HCT116 (cell line): ENCODE measurements at regions of chrX and their contacts with region 1.

Region 1: DNA sequence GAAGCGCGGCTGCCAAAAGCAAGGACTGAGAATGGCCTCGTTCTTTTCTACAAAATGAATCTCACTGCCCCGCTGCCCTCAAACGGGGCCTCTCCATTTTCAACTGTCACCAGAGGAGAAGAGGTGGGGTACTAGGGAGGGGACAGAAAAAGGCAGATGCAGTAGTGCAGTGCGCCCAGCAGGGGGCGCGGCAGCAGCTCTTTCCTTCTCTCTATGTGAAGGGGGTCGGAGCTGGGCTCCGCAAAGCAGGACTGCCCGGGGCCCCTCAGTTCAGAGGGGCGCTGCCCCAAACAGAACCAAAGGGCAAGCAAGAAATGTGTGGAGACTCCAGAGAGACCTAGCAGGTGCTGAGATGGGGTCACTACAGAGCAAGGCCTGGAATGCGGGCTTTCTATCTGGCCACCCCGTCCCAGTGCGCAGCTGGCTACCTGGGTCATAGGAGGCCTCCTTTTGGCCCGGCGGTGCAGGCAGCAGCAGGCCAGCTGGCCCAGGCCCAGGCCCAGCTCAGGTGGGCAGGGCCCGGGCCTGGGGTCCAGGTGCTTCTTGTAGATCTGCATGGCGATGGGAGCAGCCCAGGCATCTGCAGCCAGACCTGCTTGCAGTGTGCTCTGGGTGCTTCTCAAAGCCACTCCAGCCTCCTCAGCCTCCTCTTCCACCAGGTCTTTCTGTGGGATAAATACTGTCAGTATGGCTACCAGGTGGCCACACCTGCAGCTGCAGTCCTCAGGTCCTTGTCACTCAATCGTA is 5.9 kb downstream of the IRAK1 start:
- DNase-seq: no peak
- ATAC-seq: peak; percentile 68
- H3K4me3 ChIP-seq: no peak overlapping the region
- H3K27ac ChIP-seq: no peak overlapping the region
- H3K4me1 ChIP-seq: peaks cover 0 to 22% of the 10 kb centered on the region in 2 experiments; a peak in 2 of 4 replicates
- H3K27me3 ChIP-seq: no peaks in the 10 kb centered on the region
- CTCF ChIP-seq: peak in 2 of 3 experiments; percentile 78; a peak in 4 of 6 replicates
- POLR2A ChIP-seq: no peak
- RAD21 ChIP-seq: no peak

Region 2: GRCh38 chrX:154051201-154051810 is 37.5 kb after region 1 on chrX:
- CTCF ChIA-PET with region 1: no interaction called
- POLR2A ChIA-PET with region 1: no interaction called
- RAD21 ChIA-PET with region 1: no interaction called
- intact Hi-C with region 1: loop called (anchors 1 kb)
- DNase-seq: peak; percentile 3
- ATAC-seq: peak; percentile 86
- H3K4me3 ChIP-seq: no peak overlapping the region
- H3K27ac ChIP-seq: no peak overlapping the region
- H3K4me1 ChIP-seq: no peaks in the 10 kb centered on the region
- H3K27me3 ChIP-seq: no peaks in the 10 kb centered on the region
- CTCF ChIP-seq: peak; percentile 34 to 67 (median 61); a peak in 5 of 6 replicates
- POLR2A ChIP-seq: no peak
- RAD21 ChIP-seq: peak; percentile 49

Region 3: GRCh38 chrX:154074199-154074598 is 60.4 kb after region 1 on chrX:
- CTCF ChIA-PET with region 1: no interaction called
- POLR2A ChIA-PET with region 1: no interaction called
- RAD21 ChIA-PET with region 1: no interaction called
- intact Hi-C with region 1: no loop called
- DNase-seq: no peak
- ATAC-seq: peak; percentile 87
- H3K4me3 ChIP-seq: no peak overlapping the region
- H3K27ac ChIP-seq: peak overlapping the region; percentile 42; the same call in 1 of the 2 replicates
- H3K4me1 ChIP-seq: peaks cover 16 to 19% of the 10 kb centered on the region in 2 experiments
- H3K27me3 ChIP-seq: no peaks in the 10 kb centered on the region
- CTCF ChIP-seq: no peak
- POLR2A ChIP-seq: no peak
- RAD21 ChIP-seq: no peak

Region 4: DNA sequence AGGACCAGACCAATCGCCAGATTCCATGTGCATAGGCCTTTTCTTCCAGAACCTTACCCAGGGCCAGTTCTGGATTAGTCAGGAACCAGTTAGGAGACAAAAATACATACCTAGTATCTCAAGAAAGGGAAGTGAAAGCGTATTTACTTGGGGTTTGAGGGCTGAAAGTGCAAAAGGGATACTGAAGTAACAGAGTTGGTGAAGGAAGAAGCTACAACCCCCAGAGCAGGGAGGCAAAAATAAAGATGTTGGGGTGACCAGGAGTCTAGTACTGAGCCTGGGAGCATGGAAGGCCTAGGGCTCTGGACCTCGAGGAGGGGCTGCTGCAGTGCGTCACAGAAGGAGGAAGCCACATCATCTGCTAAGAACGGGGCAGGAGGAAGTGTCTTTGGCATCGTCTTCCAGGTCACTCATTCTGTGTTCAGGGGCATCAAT is 320.1 kb after region 1 on chrX:
- CTCF ChIA-PET with region 1: no interaction called
- POLR2A ChIA-PET with region 1: no interaction called
- RAD21 ChIA-PET with region 1: no interaction called
- intact Hi-C with region 1: no loop called
- DNase-seq: no peak
- ATAC-seq: no peak
- H3K4me3 ChIP-seq: no peak overlapping the region
- H3K27ac ChIP-seq: no peak overlapping the region
- H3K4me1 ChIP-seq: no peaks in the 10 kb centered on the region
- H3K27me3 ChIP-seq: no peaks in the 10 kb centered on the region
- CTCF ChIP-seq: no peak
- POLR2A ChIP-seq: no peak
- RAD21 ChIP-seq: no peak